ENCODE measurements at regions of chr4 and their contacts with region 1.

Region 1: GRCh38 chr4:141142423-141142822 is 9.2 kb upstream of the RNF150 start:
- DNase-seq: no peak
- H3K4me3 ChIP-seq: no peak overlapping the region
- H3K27ac ChIP-seq: no peak overlapping the region
- H3K27me3 ChIP-seq: no peaks in the 10 kb centered on the region
- CTCF ChIP-seq: no peak

Region 2: DNA sequence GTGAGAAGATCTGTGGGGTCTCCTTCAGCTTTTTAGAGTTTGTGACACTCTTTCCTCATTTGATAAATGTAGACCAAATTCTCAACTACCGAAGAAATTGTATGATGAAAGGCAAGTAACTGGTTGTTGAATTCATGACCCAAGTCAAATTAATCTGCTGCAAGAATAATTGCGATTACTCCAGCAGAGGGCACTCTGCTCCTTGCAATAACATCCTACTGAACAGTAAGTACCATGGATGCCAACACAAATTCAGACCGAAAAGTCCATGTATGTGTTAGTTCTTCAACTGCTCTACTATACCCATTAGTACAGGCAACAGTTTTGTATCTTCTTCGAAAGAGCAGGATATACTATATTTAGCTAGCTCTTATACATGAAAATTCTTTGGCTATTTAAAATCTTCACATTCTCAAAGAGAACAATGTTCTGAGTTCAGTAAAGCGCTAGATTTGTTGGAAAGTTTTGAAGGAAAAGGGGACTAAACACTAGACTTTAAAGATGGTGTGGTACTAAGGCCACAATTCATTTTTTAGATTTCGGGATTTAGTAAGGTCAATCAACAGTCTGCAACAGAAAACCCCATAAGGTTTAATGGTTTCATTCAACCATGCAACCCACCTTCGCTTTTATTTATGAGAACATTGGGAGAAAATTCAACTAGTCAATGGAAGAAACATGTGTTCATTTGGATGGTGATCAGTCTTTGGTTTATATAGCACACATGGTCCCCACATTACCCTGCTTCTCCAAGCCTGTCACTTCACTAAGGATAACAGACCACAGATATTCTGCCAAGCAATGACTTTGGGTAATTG is 280.9 kb before region 1 on chr4:
- CTCF ChIA-PET with region 1: interaction called, 12 read pairs
- POLR2A ChIA-PET with region 1: no interaction called
- DNase-seq: peak; percentile 80
- H3K4me3 ChIP-seq: no peak overlapping the region
- H3K27ac ChIP-seq: no peak overlapping the region
- H3K27me3 ChIP-seq: no peaks in the 10 kb centered on the region
- CTCF ChIP-seq: peak; percentile 82

Region 3: DNA sequence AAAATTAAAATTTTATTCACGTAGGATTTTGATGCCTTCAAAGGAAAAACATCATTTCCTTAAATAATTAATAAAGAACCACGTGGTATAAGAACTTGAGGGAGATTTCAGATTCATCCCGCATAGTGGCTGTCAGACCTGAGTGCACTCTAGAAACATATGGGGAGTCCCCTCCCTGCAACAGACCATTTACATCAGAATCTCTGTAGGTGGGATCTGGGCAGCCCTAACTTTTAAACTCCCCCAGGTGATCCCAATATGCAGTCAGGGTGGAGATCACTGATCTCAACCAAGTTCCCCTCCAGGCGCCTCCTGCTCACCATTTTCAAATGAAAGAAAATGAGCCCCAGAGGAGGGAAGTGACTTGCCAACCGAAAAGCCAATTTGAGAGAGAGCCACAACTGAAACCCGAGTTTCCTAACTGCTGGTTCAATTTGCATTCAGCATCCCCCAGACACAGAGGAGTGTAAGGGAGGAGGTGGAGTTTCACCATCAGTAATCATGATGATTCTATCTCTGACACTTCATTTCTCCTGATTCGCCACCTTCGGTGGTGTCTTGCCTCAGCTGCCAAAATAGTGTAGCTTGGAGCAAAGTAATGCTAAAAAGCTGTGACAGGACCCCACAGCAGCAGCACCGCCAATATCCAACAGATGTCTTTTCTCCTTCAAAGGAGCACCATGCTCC is 20.5 kb before region 1 on chr4:
- CTCF ChIA-PET with region 1: no interaction called
- POLR2A ChIA-PET with region 1: no interaction called
- DNase-seq: no peak
- H3K4me3 ChIP-seq: no peak overlapping the region
- H3K27ac ChIP-seq: no peak overlapping the region
- H3K27me3 ChIP-seq: no peaks in the 10 kb centered on the region
- CTCF ChIP-seq: no peak

Region 4: DNA sequence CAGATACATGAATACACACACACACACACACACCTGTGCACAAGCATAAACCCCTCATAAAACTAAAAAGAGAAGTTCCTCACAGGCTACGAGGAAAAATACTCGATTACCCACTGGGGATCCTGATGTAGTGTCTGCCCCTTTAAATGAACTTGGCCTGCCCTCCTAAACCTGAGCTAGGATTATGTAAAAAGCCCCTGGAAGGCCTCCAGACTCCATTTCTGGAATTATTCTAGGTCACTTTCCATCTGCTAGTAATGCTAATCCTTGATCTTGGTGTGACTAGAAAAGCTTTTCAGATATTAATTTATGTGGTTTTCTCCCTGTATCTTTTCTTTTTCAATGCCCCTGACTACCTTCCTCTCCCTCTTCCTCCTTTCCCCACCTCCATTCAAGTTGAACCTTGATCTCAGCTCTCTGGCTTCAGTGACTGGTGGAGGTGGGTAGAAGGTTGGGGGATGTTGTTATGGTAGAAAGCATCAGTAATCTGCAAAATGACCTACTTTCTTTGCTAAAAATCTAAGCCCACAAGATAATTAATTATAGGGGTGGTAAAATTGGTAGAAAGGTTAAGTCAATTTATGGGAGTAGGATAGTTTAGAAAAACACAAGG is 52.8 kb after region 1 on chr4:
- CTCF ChIA-PET with region 1: no interaction called
- POLR2A ChIA-PET with region 1: no interaction called
- DNase-seq: no peak
- H3K4me3 ChIP-seq: no peak overlapping the region
- H3K27ac ChIP-seq: no peak overlapping the region
- H3K27me3 ChIP-seq: peaks cover 4% of the 10 kb centered on the region
- CTCF ChIP-seq: no peak

Region 5: DNA sequence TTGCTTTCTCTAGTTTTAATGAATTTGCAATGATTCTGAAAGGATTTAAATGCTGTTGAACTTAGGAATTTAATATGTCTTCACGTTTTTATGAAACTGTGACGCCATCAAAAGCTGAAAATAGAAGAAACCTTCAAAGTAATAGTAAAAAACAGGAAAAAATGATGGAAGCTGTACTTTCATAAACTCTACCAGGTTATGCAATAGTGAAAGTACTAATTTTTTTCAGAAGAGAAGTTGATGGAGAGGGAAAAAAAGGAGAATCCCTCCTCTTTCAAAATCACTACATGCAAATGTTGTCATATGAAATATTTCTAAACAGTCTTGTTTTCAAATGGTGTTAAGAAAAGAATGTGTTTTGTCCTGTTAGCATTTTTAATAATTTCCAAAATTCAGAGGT is 151.9 kb after region 1 on chr4:
- CTCF ChIA-PET with region 1: no interaction called
- POLR2A ChIA-PET with region 1: no interaction called
- DNase-seq: no peak
- H3K4me3 ChIP-seq: no peak overlapping the region
- H3K27ac ChIP-seq: no peak overlapping the region
- H3K27me3 ChIP-seq: no peaks in the 10 kb centered on the region
- CTCF ChIP-seq: no peak